ENCODE measurements at regions of chr5 and their contacts with region 1.

Region 1: DNA sequence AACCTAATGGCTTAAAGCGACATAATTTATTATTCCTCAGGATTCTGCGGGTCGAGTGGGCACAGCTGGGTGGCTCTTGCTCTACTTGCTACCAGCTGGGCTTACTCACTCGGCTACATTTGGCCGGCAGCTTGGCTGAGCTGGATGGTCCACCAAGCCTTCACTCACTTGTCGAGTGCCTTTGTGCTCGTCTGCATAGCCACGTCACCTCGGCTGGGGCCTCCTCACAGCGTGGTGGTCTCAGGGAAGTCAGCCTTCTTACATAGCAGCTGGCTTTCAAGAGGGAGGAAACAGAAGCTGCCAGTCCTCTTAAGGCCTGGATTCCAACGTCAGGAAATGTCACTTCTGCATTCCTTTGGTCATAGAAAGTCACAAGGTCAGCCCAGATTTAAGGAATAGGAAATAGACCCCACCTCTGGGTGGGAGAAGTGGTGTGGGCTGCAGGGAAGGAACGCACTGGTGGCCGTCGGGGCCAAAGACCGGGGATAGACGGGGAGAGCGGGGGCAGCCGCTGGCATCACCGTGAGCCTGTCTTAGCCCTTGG is 75.1 kb upstream of the RUFY1 start:
- DNase-seq: no peak
- H3K4me3 ChIP-seq: no peak overlapping the region
- CTCF ChIP-seq: no peak

Region 2: DNA sequence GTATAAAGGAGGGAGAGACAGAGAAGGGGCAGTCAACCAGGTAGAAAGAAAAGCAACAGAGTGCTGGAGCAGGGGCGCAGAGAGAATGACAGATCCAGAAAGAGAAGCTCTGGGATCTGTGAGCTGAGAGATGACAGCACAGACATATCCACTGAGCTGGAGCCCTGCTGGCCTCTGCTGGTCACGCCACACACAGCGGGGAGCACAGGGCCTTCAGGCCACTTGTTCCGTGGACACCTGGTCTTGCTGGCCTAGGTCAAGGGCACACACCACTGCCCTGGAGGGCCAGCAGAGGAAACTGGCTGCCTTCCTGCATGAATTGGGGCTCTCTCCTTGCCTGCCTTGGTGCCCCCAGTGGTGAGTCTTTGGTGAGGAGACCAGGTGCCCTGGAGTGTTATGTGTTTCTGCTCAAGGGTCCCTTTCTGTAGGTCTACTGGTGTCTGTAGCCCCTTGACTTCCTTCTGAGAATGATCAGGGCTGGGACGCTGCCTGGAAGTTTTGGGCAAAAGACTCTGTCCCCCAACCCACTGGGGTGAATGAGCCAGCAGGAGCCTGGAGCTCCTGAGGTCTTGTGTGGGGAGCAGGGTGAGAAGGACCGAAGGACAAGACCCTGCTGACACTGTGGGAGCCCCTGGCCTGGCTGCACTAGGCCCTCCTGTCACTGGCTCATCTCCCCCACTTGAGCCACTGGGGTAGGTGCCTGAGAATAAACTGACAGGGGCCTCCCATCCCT is 70.8 kb before region 1 on chr5:
- in situ Hi-C with region 1: loop called (anchors 5 kb)
- DNase-seq: no peak
- H3K4me3 ChIP-seq: no peak overlapping the region
- CTCF ChIP-seq: no peak

Region 3: DNA sequence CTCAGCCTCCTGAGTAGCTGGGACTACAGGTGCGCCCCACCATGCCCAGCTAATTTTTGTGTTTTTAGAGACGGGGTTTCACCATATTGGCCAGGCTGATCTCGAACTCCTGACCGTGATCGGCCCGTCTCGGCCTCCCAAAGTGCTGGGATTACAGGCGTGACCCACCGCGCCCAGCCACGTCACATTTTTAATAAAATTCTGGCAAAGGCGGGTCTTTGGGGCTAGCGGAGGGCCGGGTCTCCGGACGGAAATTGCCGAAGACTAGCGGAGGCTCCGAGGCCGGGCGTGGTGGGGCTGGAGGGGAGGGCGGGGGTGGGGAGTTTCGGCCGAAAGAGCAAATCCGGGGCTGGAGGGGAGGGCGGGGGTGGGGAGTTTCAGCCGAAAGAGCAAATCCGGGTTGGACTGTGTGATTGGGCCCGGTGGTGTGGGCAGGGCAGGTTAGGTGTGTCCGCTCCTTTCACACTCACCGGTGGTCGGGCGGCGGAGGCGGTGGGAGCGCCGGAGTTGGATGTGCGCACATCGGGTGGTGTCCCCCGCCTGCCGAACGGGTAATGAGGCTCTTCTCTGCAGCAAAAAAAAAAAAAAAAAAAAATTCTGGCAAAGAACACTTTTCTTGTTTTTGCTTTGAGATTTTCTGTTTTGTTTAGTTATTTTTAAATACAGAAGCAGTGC is 102.1 kb after region 1 on chr5:
- in situ Hi-C with region 1: no loop called
- DNase-seq: no peak
- H3K4me3 ChIP-seq: no peak overlapping the region
- CTCF ChIP-seq: no peak

Measured in astrocyte of the cerebellum (primary cell).